ENCODE measurements at regions of chr22 and their contacts with region 1.

Region 1: GRCh38 chr22:26086359-26086758 is 82.9 kb upstream of the SEZ6L start:
- DNase-seq: no peak
- H3K4me3 ChIP-seq: no peak overlapping the region
- H3K27ac ChIP-seq: no peak overlapping the region
- H3K4me1 ChIP-seq: no peaks in the 10 kb centered on the region
- H3K27me3 ChIP-seq: no peaks in the 10 kb centered on the region
- CTCF ChIP-seq: peak in 4 of 6 experiments; percentile 16 to 33 (median 24)
- POLR2A ChIP-seq: no peak

Region 2: DNA sequence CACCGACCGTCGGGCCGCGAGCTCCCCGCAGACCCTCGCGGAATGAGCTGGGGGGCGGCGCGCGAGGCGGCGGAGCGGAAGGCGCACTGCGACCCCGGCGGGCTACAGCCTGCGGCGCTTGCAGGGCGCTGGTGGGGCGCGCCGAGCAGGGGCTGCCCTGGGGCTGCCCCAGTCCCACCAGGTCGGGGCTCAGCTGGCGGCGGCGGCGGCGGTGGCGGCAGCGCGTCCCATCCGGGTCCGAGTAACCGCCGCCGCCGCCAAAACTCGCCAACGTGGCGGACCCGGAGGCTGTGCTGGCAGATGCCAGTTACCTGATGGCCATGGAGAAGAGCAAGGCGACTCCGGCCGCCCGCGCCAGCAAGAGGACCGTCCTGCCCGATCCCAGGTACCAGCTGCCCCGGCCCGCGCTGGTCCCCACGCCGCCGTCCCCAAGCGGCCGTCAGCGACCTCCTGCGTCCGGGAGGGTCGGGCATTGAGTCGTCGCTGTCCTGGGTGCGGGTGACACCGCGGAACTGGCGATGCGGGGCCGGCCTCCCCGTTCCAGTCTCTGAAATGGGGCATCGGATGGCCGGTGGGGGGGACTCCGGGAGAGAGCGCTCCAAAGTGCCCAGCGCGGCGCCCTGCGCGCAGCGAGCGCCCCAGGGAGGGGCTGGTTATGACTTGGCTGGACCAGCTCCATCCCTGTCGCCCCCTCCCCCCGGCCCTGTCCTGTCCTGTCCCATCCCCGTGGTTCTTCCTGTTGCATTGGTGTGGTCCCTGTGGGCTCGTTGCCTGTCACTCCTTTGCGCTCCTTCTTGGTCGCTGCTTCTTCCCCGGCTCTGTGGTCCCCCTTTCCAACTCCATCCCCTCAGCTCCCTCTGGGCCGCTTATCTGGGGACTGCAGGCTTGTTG is 803.4 kb before region 1 on chr22:
- intact Hi-C with region 1: no loop called
- DNase-seq: no peak
- H3K4me3 ChIP-seq: no peak overlapping the region
- H3K27ac ChIP-seq: no peak overlapping the region
- H3K4me1 ChIP-seq: no peaks in the 10 kb centered on the region
- H3K27me3 ChIP-seq: peaks cover 41% of the 10 kb centered on the region
- CTCF ChIP-seq: no peak
- POLR2A ChIP-seq: no peak

Region 3: DNA sequence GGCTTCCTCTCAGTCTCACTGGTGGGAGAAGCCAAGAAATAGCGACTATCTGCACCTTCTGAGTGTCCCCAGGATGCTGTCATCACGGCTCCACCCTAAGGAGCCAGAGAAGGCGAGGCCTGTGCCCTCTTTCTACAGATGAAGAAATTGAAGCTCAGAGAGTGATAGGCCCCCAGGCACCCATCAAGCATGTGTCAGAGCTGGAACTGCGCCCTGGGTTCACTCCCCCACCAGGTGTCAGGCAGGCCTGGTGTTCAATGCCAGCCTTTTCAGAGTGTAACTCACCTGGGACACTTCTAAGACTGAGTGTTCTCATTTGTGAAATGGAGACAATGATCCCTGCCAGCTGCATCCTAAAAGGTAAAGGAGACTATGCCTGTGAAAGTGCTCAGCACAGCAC is 44.4 kb before region 1 on chr22:
- intact Hi-C with region 1: loop called in 1 of 2 experiments (anchors 5 kb)
- DNase-seq: no peak
- H3K4me3 ChIP-seq: no peak overlapping the region
- H3K27ac ChIP-seq: no peak overlapping the region
- H3K4me1 ChIP-seq: no peaks in the 10 kb centered on the region
- H3K27me3 ChIP-seq: no peaks in the 10 kb centered on the region
- CTCF ChIP-seq: no peak
- POLR2A ChIP-seq: no peak

Region 4: GRCh38 chr22:26330966-26331625 is 244.7 kb after region 1 on chr22:
- intact Hi-C with region 1: loop called in 1 of 2 experiments (anchors 10 kb)
- DNase-seq: peak; percentile 30 to 81 (median 46)
- H3K4me3 ChIP-seq: no peak overlapping the region
- H3K27ac ChIP-seq: no peak overlapping the region
- H3K4me1 ChIP-seq: no peaks in the 10 kb centered on the region
- H3K27me3 ChIP-seq: peaks cover 9% of the 10 kb centered on the region
- CTCF ChIP-seq: peak; percentile 76 to 85 (median 81)
- POLR2A ChIP-seq: no peak

Measured in adrenal gland (tissue), 19 donors.